Posterior cingulate gyrus (tissue), 11 donors: ENCODE measurements at regions of chr12 and their contacts with region 1.

Region 1: DNA sequence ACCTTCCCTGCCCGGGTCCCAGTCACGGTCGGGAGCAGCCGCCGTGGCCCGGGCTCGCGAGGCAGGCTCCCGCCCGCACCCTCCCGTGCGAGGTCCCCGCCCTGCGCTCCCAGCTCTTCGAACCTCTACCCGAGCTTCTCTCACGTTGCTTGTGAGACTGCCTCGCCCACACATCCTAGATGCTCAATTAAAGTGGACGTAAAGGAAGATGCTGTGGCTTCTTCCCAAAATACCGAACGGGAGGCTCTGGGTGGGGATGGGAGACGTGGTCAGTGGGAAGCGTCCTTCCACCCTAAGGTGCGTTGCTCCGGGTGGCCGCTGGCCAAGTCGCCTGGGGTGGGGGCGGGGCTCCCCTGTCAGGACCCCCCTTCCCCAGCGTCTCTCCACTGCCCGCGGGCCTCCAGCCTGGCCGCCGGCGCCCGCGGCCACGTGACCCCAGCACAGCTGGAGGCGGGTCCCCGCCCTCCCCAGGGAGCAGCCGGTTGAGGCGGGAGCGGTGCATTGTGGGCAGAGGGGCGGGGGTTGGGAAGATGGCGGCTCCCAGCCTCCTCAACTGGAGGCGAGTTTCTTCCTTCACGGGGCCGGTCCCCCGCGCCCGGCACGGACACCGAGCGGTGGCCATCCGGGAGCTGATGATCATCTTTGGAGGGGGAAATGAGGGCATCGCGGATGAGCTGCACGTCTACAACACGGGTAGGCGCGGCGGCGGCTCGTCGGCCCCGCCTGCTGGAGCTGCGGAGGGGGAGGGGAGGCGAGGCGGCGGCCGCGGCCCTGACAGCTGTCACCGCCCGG is at the start of gene HCFC2:
- DNase-seq: peak; percentile 88 to 99 (median 92)

Region 2: GRCh38 chr12:104137913-104138796 is 73.9 kb after region 1 on chr12 and contains the start of gene NFYB:
- intact Hi-C with region 1: loop called (anchors 1 kb)
- DNase-seq: peak; percentile 89 to 99 (median 94)

Region 3: DNA sequence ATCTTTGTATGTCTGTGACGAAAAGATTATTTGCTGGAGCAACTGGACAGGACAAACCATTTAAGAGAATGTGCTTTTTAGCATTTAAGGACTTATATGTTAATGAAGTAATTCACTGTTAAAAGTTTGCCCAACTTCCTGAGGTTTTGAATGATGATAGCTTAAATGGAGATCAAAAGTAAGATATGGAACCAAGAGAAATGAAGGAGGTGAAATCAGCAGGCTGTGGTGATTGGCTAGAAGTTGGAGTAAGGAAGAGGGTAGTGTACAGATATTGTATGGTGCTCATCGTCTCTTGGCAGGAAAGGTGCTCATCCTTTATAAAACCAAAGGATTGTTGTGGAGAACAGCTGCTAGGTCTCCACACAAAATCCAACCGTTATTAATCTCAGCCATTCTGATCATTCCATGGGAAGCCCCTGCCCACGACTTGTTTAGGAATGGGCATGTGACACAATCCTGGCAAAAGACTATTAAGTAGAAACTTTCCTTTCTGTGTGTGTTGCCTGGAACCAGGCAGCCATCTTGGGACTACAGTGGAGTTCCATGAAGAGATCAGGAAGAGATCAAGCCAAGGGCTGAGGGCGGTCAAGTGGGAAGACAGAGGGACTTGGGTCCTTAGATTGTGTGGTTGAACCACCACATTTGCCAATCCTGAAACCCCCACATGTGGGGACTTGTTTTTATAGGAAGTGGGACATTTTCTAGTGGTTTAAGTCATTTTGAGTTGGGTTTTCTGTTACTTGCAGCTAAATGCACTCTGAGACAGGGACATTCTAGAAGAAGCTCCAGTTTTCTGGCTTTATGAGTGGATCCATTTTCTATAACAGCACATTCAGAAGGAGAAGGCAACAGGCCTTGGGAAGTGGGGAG is 335.7 kb after region 1 on chr12:
- intact Hi-C with region 1: no loop called
- DNase-seq: no peak